ENCODE measurements at regions of chr2 and their contacts with region 1.

Region 1: DNA sequence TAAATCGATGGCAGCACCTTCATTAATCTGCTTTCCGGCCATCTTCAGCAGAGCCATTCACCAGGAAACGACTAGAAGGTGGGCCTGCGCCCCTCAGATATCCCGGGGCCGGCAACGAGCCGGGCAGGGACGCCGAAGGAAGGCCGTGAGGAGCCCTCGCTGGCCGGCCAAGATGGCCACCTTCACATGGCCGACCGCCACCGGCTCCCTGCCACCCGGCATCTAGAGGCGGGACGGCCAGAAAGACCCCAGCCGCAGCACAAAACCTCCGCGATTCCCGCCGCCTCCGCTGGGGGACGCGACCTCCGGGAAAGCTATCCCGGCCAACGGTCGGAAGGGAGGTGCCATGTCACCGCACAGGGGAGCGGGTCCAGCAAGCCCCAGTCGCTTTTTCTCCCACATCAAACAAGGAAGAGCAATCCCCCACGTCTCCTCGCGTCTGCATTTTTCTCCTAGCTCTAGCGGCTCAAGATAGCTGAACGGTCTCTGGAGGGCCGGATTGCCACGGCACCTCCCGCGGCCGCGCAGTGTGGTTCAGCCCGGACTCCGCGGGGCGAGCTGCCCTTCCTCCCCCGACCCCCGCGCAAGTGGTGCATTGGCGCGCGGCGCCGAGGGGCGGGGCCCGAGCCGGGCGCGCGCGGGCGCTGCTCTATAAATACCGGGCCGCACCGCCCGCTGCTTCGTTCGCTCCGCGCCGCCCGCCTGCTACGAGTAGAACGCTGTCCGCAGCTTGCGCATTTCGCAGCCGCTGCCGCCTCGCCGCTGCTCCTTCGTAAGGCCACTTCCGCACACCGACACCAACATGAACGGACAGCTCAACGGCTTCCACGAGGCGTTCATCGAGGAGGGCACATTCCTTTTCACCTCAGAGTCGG is at the start of gene MAT2A:
- DNase-seq: peak; percentile 94
- H3K4me3 Mint-ChIP-seq: peak within 1 kb of the TSS; percentile 91
- H3K27ac Mint-ChIP-seq: peak within 1 kb of the TSS; percentile 99
- H3K4me1 Mint-ChIP-seq: peaks cover 36% of the 10 kb centered on the region
- H3K27me3 Mint-ChIP-seq: no peaks in the 10 kb centered on the region
- total RNA-seq, gene MAT2A: 221 to 228 TPM

Region 2: GRCh38 chr2:85327822-85328617 is 210.7 kb before region 1 on chr2 and contains the start of gene TGOLN2:
- CTCF ChIA-PET with region 1: no interaction called
- intact Hi-C with region 1: loop called (anchors 1 kb)
- DNase-seq: peak; percentile 95
- H3K4me3 Mint-ChIP-seq: peak within 1 kb of the TSS; percentile 99
- H3K27ac Mint-ChIP-seq: peak within 1 kb of the TSS; percentile 99
- H3K4me1 Mint-ChIP-seq: peaks cover 25% of the 10 kb centered on the region
- H3K27me3 Mint-ChIP-seq: no peaks in the 10 kb centered on the region
- total RNA-seq, gene TGOLN2: 82.5 to 85.4 TPM

Region 3: GRCh38 chr2:85437488-85438284 is 101.0 kb before region 1 on chr2:
- CTCF ChIA-PET with region 1: interaction called, 8 read pairs
- intact Hi-C with region 1: loop called (anchors 1 kb)
- DNase-seq: peak; percentile 87
- H3K4me3 Mint-ChIP-seq: peak overlapping the region; percentile 77
- H3K27ac Mint-ChIP-seq: peak overlapping the region; percentile 89
- H3K4me1 Mint-ChIP-seq: peaks cover 26% of the 10 kb centered on the region
- H3K27me3 Mint-ChIP-seq: no peaks in the 10 kb centered on the region

Region 4: DNA sequence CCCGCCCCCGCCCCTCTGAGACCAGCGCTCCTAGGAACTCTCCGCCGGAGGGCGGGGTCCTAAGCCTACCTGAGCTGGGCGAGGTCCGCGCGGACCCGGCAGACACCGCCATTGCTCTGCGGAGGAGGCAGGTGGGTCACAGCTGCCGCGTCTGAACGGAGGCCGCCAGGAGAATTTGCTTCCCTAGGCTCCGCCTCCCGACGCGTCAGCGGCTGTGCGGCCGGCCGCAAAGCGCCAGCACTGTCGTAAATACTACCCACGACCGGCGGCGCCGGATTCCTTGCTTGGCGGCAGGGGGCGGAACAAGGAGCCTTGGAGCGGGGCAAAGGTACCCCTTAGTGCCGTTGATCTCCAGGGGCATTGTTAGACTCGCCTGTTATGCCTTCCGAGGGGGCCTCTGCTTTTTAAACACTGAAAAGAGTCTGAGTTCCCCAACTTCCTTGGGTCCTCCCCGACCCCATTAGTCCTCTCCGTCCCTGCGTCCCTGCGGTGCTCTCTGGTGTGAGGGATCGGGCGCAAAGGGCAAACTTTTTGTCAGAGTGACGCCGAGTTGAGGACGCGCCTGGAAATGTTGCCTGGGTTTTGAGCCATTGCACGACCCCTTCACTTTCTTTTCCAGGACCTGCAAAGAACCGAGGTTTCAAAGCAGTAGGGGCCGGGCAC is 22.7 kb after region 1 on chr2 and contains the start of gene GGCX:
- CTCF ChIA-PET with region 1: interaction called, 111 read pairs
- intact Hi-C with region 1: loop called (anchors 1 kb)
- DNase-seq: peak; percentile 97
- H3K4me3 Mint-ChIP-seq: peak within 1 kb of the TSS; percentile 90
- H3K27ac Mint-ChIP-seq: peak within 1 kb of the TSS; percentile 85
- H3K4me1 Mint-ChIP-seq: peaks cover 34% of the 10 kb centered on the region
- H3K27me3 Mint-ChIP-seq: no peaks in the 10 kb centered on the region
- total RNA-seq, gene GGCX: 17.5 to 18.8 TPM

Region 5: DNA sequence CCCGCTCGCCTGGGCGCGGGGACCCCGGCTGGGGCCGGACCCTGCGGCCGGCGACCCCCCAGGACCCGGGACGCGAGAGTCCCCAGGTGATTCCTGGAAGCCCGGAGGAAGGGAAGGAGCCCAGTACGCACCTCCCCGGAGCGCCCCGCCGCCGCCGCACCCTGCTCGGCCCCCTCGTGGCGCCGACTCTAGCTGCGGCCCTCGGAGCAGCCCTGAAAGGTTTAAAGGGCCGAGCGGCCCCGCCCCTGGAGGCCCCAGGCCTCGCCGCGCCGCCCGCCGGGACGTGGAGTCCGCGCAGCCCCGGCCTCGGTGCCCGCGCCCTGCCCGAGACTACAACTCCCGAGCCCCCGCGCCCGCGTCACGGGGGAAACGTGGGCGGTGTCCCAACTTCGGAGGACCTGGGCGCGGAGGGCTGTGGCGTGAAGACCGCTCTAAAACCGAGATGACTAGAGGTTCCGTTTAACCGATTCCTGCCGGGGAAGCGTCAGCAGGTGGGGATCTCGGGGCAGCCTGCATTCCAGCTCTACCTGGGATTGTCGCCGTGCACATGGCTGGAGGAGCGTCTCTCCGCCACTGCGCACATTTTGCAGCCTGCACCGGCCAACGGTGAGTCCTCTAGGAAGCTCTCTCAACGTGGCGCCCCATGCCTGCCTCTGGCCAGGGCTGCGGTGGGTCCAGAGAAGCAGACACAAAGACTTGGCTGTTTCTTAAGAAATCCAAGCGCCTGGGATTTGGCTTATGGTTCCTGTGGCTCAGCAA is 63.9 kb after region 1 on chr2 and contains the start of gene TMEM150A:
- CTCF ChIA-PET with region 1: interaction called, 5 read pairs
- intact Hi-C with region 1: loop called (anchors 2 kb)
- DNase-seq: peak; percentile 86
- H3K4me3 Mint-ChIP-seq: peak within 1 kb of the TSS; percentile 87
- H3K27ac Mint-ChIP-seq: peak within 1 kb of the TSS; percentile 33
- H3K4me1 Mint-ChIP-seq: peaks cover 25% of the 10 kb centered on the region
- H3K27me3 Mint-ChIP-seq: no peaks in the 10 kb centered on the region
- total RNA-seq, gene TMEM150A: 0.55 to 0.67 TPM

Measured in activated naive CD4-positive, alpha-beta T cell treated with anti-CD3 and anti-CD28 coated beads for 36 hours (primary cell).